GM10248 (cell line): ENCODE measurements at regions of chr16 and their contacts with region 1.

Region 1: DNA sequence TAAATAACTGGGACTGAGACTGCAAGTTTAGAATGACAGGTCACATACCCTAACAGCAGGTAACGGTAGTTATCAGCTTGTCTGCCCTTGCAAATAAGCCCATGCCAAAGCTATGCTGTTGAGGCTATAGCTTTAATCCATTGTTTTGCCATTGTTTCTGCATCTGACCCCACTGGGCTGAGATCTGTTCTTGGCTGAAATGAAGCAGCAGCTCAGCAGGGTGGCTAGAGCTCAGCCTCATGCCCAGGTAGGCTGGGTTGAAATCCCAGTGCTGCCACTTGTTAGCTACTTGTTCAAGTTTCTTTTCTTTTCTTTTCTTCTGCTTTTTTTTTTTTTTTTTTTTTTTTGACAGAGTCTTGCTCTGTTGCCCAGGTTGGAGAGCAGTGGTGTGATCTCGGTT is 40.1 kb downstream of the NKD1 start:
- DNase-seq: no peak
- CTCF ChIP-seq: no peak

Region 2: DNA sequence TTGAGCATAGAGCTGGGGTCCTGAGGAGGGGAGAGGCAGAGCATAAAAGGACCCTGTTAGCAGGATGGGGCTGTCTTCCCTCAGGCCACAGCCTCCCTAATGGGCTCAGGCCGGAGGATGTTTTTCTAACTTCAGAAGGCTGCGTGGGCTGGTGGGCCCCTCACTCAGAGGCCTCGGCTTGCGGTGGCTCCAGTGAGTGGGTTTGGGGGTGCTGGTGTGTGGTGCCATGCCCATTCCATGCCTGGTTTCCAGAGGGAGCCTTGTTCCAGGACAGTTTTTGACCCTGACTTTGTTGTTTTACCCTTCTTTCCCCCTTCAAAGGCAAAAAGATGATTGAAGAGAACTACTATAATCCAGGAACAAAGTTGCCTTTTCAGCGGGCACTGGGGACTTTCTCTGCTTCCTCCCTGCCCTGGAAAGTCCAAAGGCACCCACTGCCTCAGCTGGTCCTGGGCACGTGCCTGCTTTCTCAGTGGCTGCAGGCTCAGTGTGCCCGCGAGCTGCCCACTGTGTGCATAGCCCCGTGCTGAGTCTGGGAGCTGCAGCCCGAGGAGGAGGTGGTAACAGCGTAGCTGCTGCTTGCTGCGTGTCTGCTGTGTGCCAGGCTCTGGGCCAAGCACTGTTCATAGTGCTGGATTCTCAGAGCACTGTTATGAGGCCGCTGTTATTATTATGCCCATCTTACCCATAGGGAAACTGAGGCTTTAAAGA is 28.3 kb before region 1 on chr16:
- CTCF ChIA-PET with region 1: no interaction called
- POLR2A ChIA-PET with region 1: no interaction called
- DNase-seq: no peak
- CTCF ChIP-seq: no peak

Region 3: GRCh38 chr16:50578137-50578536 is 10.1 kb before region 1 on chr16:
- CTCF ChIA-PET with region 1: interaction called, 16 read pairs
- POLR2A ChIA-PET with region 1: no interaction called
- DNase-seq: no peak
- CTCF ChIP-seq: no peak

Region 4: DNA sequence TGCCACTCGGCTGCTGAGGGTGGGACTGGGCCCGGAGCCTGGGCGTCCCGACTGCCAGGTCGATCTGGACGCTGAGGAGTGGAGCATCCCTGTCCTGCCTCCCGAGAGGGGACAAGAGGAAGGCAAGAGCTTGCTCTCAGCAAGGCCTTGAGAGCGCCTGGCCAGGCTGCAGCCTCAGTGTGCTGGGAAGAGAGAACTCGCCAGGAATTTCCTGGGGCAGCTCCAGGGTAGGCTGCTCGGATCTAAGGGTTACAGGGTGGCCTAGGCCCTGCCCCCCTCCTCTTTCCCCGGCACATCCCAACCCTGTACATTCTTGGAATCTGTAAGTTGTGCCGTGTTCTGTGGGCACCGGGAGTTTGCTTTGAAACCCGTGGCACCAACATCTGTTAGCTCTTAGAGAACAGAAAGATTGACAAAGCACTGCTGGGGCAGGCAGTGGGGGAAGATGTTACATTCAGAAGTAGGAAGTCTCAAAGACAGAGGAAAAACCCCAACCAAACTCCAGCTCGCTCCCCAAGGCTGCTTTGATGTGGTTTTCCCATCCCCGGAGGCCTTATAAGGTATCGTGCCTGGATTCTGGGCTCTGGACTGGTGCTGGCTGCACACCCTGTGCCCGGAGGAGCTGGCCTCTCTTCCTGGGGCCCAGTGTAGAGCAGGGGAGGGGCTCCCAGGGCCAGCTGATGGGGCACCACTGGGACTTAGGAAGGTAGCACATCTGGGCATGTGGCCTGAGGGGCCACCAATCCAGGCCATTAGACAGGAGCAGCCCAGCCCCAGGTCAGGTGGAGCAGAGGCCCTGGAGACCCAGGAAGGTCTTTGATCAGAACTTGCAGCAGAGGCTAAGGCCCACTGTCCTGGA is 15.2 kb after region 1 on chr16:
- CTCF ChIA-PET with region 1: no interaction called
- POLR2A ChIA-PET with region 1: no interaction called
- DNase-seq: no peak
- CTCF ChIP-seq: no peak